MCF 10A (cell line): ENCODE measurements at regions of chr20 and their contacts with region 1.

Region 1: DNA sequence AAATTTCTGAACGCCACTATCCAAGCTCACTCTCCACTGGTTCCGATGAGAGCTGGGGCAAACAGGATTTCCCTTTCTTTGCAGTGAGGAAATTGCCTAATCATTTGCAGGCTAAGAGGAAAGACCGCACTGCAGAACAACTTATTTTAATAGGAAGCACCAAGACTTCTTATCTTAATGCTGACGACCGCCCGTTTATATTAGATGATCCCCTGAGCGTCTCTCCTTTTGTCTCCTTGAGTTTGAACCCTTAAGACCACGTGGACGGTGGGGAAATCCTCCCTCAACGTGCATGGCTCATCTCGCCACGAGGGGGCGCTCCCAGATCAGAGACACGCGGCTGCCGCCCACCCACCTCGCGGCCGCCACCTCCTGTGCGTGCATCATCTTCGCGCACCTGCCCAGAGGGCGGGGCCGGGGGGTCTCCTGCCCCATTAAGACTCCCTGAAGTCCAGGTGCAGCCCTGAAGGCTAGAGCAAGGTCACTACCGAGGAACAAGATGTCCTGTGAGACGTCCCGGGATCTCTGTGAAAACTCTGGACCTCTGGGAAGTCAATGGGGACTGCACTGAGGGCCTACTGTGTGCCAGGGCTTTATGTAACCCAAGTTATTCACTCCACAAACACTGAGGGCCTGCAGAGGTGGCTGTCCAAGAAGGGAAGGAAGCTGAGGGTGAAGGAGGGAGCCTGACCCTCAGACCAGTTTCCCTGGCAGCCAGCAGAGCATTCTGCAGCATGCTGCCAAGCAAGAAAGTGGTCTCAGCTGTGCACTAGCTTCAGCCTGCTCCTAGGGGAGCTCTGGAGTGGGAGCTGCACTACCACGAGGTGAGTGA is 28.1 kb downstream of the PDYN start:
- DNase-seq: peak; percentile 73
- H3K4me3 Mint-ChIP-seq: no peak overlapping the region
- H3K27ac Mint-ChIP-seq: no peak overlapping the region
- H3K4me1 Mint-ChIP-seq: no peaks in the 10 kb centered on the region
- H3K27me3 Mint-ChIP-seq: peaks cover 58% of the 10 kb centered on the region
- CTCF ChIP-seq: peak; percentile 94

Region 2: DNA sequence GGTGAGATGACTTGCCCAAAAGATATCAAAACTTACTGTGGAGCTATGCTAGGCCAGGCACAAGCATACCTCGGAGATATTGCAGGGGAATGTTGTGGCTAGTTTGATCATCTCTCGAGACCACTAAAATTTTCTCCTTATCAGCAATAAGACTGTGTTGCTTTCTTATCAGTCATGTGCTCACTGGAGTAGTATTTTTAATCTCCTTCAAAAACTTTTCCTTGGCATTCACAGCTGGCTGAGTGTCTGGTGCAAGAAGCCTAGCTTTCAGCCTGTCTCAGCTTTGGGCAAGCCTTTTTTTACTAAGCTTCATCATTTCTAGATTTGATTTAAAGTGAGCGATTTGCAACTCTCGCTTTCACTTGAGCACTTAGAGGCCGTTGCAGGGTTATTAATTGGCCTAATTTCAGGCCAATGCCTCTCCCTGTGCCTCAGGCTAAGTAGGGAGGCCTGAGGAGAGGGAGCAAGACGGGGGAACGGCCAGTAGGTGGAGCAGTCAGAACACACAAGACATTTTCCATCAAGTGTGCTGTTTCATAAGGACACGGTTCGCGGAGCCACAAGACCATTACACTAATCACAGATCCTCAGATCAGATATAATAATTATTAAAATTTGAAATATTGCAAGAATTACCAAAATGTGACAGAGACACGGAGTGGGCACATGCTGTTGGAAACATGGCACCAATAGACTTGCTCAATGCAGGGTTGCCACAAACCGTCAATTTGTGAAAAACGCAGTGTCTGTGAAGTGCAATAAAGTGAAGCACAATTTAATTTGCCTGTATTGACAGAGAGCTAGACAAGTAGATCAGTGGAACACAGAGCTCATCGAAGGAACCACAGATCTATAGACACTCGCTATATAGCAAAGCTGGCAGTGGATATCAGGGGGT is 201.4 kb before region 1 on chr20:
- CTCF ChIA-PET with region 1: interaction called, 5 read pairs
- POLR2A ChIA-PET with region 1: no interaction called
- intact Hi-C with region 1: loop called (anchors 10 kb)
- DNase-seq: peak; percentile 84
- H3K4me3 Mint-ChIP-seq: no peak overlapping the region
- H3K27ac Mint-ChIP-seq: no peak overlapping the region
- H3K4me1 Mint-ChIP-seq: peaks cover 10% of the 10 kb centered on the region
- H3K27me3 Mint-ChIP-seq: no peaks in the 10 kb centered on the region
- CTCF ChIP-seq: peak; percentile 54

Region 3: DNA sequence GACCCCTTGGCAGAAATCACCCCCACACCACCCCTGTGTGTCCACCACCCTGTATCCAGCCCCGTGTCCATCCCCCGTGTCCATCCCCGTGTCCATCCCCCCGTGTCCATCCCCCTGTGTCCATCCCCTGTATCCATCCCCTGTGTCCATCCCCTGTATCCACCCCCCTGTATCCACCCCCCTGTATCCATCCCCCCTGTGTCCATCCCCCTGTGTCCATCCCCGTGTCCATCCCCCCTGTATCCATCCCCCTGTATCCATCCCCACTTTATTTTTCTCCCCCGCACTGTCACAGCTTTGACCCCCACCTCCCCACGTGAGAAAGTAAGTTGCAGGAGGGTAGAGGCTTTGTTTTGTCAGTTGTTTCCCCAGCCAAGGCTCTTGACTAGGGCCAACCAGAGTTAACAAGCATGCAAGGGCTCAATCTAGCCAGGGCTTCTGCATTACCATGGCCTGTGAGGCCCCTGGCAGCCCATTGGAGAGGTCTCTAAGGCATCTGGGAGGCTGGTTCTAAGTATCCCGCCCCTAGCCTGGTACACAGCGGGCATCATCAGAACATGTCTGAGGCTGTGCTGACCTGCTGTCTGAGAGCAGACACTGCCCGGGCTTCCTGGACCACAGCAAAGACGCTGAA is 88.6 kb before region 1 on chr20:
- CTCF ChIA-PET with region 1: no interaction called
- POLR2A ChIA-PET with region 1: no interaction called
- intact Hi-C with region 1: no loop called
- DNase-seq: no peak
- H3K4me3 Mint-ChIP-seq: no peak overlapping the region
- H3K27ac Mint-ChIP-seq: no peak overlapping the region
- H3K4me1 Mint-ChIP-seq: peaks cover 6% of the 10 kb centered on the region
- H3K27me3 Mint-ChIP-seq: no peaks in the 10 kb centered on the region
- CTCF ChIP-seq: no peak

Region 4: GRCh38 chr20:1952737-1953530 is 12.8 kb before region 1 on chr20:
- CTCF ChIA-PET with region 1: interaction called, 20 read pairs
- POLR2A ChIA-PET with region 1: interaction called, 4 read pairs
- intact Hi-C with region 1: no loop called
- DNase-seq: no peak
- H3K4me3 Mint-ChIP-seq: no peak overlapping the region
- H3K27ac Mint-ChIP-seq: no peak overlapping the region
- H3K4me1 Mint-ChIP-seq: no peaks in the 10 kb centered on the region
- H3K27me3 Mint-ChIP-seq: no peaks in the 10 kb centered on the region
- CTCF ChIP-seq: no peak

Region 5: DNA sequence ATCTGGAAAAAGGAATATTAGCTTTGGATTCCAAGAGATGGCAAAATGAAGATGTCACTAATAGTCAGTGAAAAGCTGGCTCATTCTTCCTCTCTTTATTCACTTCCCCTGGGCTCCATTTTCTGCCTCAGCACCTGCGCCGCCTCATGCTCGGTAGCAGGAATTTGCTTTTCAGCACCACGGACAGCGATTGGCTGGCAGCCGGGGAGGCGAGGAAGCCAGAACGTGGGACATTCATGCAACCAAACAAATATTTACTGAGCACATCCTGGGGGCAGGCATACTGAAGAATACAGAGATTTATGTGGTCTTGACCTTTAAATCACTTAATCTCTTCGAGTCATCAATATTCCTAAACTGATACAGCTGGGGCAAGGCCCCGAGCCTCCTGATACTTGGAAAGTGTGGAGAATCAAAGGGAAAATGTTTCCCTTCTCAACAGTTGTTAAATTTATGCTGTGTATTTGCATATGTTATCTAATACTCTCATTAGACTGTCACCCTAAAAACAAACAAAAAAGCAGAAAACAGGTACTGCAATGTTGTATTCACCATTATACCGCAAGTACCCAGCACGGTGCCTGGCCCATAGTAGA is 40.2 kb after region 1 on chr20:
- CTCF ChIA-PET with region 1: interaction called, 12 read pairs
- POLR2A ChIA-PET with region 1: no interaction called
- intact Hi-C with region 1: no loop called
- DNase-seq: peak; percentile 63
- H3K4me3 Mint-ChIP-seq: no peak overlapping the region
- H3K27ac Mint-ChIP-seq: no peak overlapping the region
- H3K4me1 Mint-ChIP-seq: no peaks in the 10 kb centered on the region
- H3K27me3 Mint-ChIP-seq: peaks cover 46% of the 10 kb centered on the region
- CTCF ChIP-seq: no peak